ENCODE measurements at regions of chr9 and their contacts with region 1.

Region 1: GRCh38 chr9:95004411-95005277 is 278.1 kb downstream of the AOPEP start:
- DNase-seq: peak; percentile 51
- H3K4me3 Mint-ChIP-seq: peak overlapping the region; percentile 85
- H3K27ac Mint-ChIP-seq: peak overlapping the region; percentile 97
- H3K4me1 Mint-ChIP-seq: peaks cover 35% of the 10 kb centered on the region
- H3K27me3 Mint-ChIP-seq: no peaks in the 10 kb centered on the region
- CTCF ChIP-seq: no peak

Region 2: GRCh38 chr9:94833802-94834201 is 170.8 kb before region 1 on chr9:
- CTCF ChIA-PET with region 1: no interaction called
- POLR2A ChIA-PET with region 1: no interaction called
- intact Hi-C with region 1: no loop called
- DNase-seq: no peak
- H3K4me3 Mint-ChIP-seq: no peak overlapping the region
- H3K27ac Mint-ChIP-seq: no peak overlapping the region
- H3K4me1 Mint-ChIP-seq: no peaks in the 10 kb centered on the region
- H3K27me3 Mint-ChIP-seq: no peaks in the 10 kb centered on the region
- CTCF ChIP-seq: no peak

Region 3: DNA sequence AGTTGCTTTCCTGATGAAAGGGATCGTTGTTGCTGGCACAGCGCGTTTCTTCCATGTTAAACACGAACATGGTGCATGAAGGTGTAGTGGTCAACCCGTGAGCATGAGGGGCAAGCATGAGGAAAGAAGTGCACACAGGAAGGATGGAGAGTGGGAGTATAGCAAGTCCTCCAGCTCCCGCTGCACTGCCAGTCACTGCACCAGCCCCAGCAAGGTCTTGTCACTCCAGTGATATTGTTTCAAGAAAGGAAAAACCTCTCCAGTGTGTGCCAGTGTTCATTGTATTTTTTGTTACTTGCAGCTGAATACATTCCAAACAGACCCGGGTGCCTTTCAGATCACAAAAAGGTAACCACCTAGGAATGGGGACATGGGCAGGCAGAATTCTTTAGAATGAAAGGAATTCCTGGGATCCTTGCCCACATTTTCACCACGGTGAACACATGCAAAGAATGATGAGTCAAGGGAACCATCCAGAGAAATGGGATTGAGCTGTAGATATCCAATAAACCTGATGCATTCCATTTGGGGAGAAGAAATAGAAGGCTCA is 91.9 kb before region 1 on chr9:
- CTCF ChIA-PET with region 1: interaction called, 4 read pairs
- POLR2A ChIA-PET with region 1: interaction called, 25 read pairs
- intact Hi-C with region 1: no loop called
- DNase-seq: peak; percentile 82
- H3K4me3 Mint-ChIP-seq: peak overlapping the region; percentile 21
- H3K27ac Mint-ChIP-seq: peak overlapping the region; percentile 57
- H3K4me1 Mint-ChIP-seq: peaks cover 35% of the 10 kb centered on the region
- H3K27me3 Mint-ChIP-seq: no peaks in the 10 kb centered on the region
- CTCF ChIP-seq: no peak

Region 4: GRCh38 chr9:94928691-94929372 is 75.8 kb before region 1 on chr9:
- CTCF ChIA-PET with region 1: interaction called, 8 read pairs
- POLR2A ChIA-PET with region 1: interaction called, 26 read pairs
- intact Hi-C with region 1: no loop called
- DNase-seq: no peak
- H3K4me3 Mint-ChIP-seq: peak overlapping the region; percentile 6
- H3K27ac Mint-ChIP-seq: peak overlapping the region; percentile 89
- H3K4me1 Mint-ChIP-seq: peaks cover 56% of the 10 kb centered on the region
- H3K27me3 Mint-ChIP-seq: no peaks in the 10 kb centered on the region
- CTCF ChIP-seq: no peak

Region 5: GRCh38 chr9:94952565-94953373 is 51.9 kb before region 1 on chr9:
- CTCF ChIA-PET with region 1: interaction called, 4 read pairs
- POLR2A ChIA-PET with region 1: interaction called, 11 read pairs
- intact Hi-C with region 1: no loop called
- DNase-seq: no peak
- H3K4me3 Mint-ChIP-seq: no peak overlapping the region
- H3K27ac Mint-ChIP-seq: no peak overlapping the region
- H3K4me1 Mint-ChIP-seq: peaks cover 50% of the 10 kb centered on the region
- H3K27me3 Mint-ChIP-seq: no peaks in the 10 kb centered on the region
- CTCF ChIP-seq: no peak

Region 6: GRCh38 chr9:95048225-95049087 is 43.8 kb after region 1 on chr9:
- CTCF ChIA-PET with region 1: interaction called, 4 read pairs
- POLR2A ChIA-PET with region 1: interaction called, 49 read pairs
- intact Hi-C with region 1: loop called (anchors 1 kb)
- DNase-seq: peak; percentile 85
- H3K4me3 Mint-ChIP-seq: peak overlapping the region; percentile 78
- H3K27ac Mint-ChIP-seq: peak overlapping the region; percentile 76
- H3K4me1 Mint-ChIP-seq: peaks cover 16% of the 10 kb centered on the region
- H3K27me3 Mint-ChIP-seq: no peaks in the 10 kb centered on the region
- CTCF ChIP-seq: no peak

Measured in MCF 10A (cell line).